ENCODE measurements at regions of chr5 and their contacts with region 1.

Region 1: DNA sequence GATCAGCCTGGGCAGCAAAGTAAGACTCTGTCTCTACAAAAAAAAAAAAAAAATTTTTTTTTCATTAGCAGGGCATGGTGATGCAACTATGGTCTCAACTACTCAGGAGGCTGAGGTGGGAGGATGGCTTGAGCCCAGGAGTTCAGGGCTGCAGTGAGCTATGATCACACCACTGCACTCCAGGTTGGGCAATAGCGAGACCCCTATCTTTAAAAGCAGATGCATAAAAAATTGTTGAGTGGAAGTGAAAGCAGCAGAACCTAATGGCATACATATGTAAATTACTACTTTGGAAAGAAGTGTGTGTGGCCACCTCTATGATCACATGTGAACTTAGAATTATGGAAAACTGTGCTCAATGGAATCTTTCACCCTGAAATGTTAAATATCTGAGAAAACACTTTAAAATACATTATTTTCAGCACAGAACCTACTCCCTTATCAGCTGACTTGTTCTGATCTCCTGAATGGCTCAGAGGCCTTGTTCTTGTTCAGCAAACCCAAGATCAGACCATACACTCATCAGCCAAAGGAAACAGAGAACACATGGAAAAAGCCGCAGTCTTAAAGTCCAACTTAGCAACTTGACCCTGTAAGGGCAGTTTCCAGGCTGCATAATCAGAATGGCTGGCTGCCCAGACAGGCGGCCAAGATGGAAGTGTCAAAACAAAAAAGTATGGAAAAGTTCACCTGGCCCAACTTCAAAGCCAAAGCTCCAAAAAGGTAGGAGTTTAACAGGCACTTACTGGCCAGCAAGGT is 56.5 kb downstream of the SIL1 start:
- DNase-seq: peak; percentile 65 to 81
- ATAC-seq: peak; percentile 85
- H3K4me3 ChIP-seq: no peak overlapping the region
- H3K27ac ChIP-seq: peak overlapping the region; percentile 67 to 96
- H3K4me1 ChIP-seq: peaks cover 3 to 6% of the 10 kb centered on the region in 2 donors
- H3K27me3 ChIP-seq: no peaks in the 10 kb centered on the region

Region 2: GRCh38 chr5:139104577-139105276 is 36.9 kb before region 1 on chr5:
- intact Hi-C with region 1: loop called (anchors 5 kb)
- DNase-seq: peak; percentile 87 to 88
- ATAC-seq: peak; percentile 94
- H3K4me3 ChIP-seq: no peak overlapping the region
- H3K27ac ChIP-seq: peak overlapping the region; percentile 95 to 98
- H3K4me1 ChIP-seq: peaks cover 3 to 18% of the 10 kb centered on the region in 2 donors
- H3K27me3 ChIP-seq: no peaks in the 10 kb centered on the region

Measured in aorta (tissue), 5 donors.